Pancreas (tissue), 10 donors: ENCODE measurements at regions of chr3 and their contacts with region 1.

Region 1: DNA sequence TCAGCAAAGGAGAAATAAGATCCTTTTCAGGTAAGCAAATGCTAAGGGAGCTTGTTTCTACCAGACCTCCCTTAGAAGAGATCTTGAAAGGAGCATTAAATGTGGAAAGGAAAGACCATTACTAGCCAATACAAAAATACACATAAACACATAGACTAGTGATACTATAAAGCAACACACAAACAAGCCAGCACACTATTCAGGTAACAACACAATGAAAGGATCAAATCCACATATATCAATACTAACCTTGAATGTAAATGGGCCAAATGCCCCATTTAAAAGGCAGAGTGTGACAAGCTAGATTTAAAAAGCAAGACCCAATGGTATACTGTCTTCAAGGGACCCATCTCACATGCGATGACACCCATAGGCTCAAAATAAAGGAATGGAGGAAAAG is 317.6 kb downstream of the TBL1XR1 start:
- DNase-seq: no peak
- ATAC-seq: no peak
- H3K4me3 ChIP-seq: no peak overlapping the region
- H3K27ac ChIP-seq: no peak overlapping the region
- H3K4me1 ChIP-seq: no peaks in the 10 kb centered on the region
- H3K27me3 ChIP-seq: no peaks in the 10 kb centered on the region
- CTCF ChIP-seq: no peak

Region 2: GRCh38 chr3:176362191-176362731 is 517.4 kb before region 1 on chr3:
- intact Hi-C with region 1: no loop called
- DNase-seq: peak in 2 of 6 donors; percentile 12 to 62
- ATAC-seq: no peak
- H3K4me3 ChIP-seq: no peak overlapping the region
- H3K27ac ChIP-seq: no peak overlapping the region
- H3K4me1 ChIP-seq: no peaks in the 10 kb centered on the region
- H3K27me3 ChIP-seq: no peaks in the 10 kb centered on the region
- CTCF ChIP-seq: no peak

Region 3: GRCh38 chr3:176939022-176939817 is 59.5 kb after region 1 on chr3:
- intact Hi-C with region 1: loop called in 1 of 3 experiments (anchors 5 kb)
- DNase-seq: peak in 3 of 6 donors; percentile 55 to 67 (median 57)
- ATAC-seq: peak; percentile 94 to 99 (median 98)
- H3K4me3 ChIP-seq: no peak overlapping the region
- H3K27ac ChIP-seq: no peak overlapping the region
- H3K4me1 ChIP-seq: no peaks in the 10 kb centered on the region
- H3K27me3 ChIP-seq: no peaks in the 10 kb centered on the region
- CTCF ChIP-seq: peak; percentile 48 to 70 (median 64)